ENCODE measurements at regions of chr14 and their contacts with region 1.

Region 1: DNA sequence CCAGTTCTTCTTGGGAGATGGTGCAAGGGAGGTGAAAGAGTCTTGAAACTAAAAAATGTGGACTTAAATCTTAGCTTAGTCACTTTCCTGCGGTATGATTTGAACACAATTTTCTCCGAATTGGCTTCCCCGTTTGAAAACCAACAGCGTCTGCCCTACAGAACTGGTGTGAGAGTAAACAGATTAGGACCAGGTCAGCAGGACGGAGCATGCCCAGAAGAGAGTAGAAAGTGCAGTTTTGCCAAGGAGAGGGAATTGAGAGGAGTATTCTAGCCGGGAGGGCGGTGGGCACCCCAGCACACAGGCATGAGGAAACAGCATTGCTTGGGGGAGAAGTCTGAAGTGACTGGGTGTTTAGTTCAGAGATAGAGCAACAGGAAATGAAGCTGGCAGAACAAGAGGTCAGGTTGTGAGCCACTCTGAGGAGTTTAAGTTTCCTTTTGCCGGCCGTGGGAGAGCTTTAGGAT is 927.1 kb downstream of the VRK1 start:
- DNase-seq: peak in 7 of 9 experiments; percentile 37 to 79 (median 52)
- ATAC-seq: peak; percentile 76
- H3K4me3 ChIP-seq: peak overlapping the region; percentile 16 to 41
- H3K4me3 Mint-ChIP-seq: peak overlapping the region; percentile 83
- H3K27ac ChIP-seq: peak overlapping the region; percentile 60 to 72
- H3K27ac Mint-ChIP-seq: peak overlapping the region; percentile 98
- H3K4me1 ChIP-seq: peaks cover 65% of the 10 kb centered on the region
- H3K4me1 Mint-ChIP-seq: peaks cover 78% of the 10 kb centered on the region
- H3K27me3 ChIP-seq: no peaks in the 10 kb centered on the region
- H3K27me3 Mint-ChIP-seq: no peaks in the 10 kb centered on the region
- CTCF ChIP-seq: no peak

Region 2: DNA sequence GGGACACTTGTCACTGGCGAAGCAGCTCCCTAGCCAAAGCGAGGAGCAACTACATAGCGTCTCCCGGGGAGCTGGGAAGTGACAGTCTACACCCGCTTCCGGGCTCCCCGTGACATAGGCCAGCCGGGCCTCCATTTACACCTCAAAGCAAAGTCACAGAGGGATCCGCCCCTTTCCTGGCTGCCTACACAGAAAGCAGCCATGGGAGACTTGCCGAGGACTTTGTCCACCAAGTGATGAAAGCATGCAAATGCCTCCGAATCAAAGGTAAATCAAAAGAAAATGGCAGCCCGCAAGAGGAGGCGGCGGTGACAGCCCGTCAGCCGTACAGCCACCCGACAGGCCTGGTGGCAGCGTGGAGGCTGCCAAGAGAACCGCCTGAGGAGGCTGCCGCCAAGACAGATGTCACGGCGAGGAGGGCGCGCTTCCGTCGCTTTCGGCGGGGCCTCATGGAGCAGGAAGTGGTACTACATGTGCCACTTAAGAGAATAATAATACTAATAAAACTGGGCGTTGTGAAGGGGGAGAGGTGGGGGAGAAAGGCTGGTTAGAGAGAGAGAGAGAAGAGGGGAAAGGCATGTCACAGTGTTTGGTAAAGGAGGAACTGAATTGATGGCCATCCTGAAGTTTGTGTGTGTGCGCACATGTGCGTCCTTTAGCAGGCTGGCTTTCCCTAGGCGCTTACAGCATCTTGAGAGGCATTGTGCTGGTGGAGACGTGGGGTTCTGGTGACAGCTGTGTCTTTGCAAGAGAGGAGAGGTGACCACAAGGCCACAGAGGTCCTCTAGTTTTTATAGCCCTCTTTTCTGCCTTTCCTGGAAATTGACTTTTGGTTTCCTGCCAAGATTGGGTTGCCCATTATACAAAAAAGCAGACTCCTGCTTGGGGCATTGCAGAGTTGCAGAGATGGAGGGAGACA is 265.4 kb before region 1 on chr14:
- CTCF ChIA-PET with region 1: no interaction called
- POLR2A ChIA-PET with region 1: no interaction called
- intact Hi-C with region 1: loop called in 1 of 2 experiments (anchors 5 kb)
- DNase-seq: peak; percentile 60 to 92 (median 84)
- ATAC-seq: peak; percentile 81
- H3K4me3 ChIP-seq: peak overlapping the region; percentile 53 to 62
- H3K4me3 Mint-ChIP-seq: peak overlapping the region; percentile 88
- H3K27ac ChIP-seq: peak overlapping the region; percentile 82 to 88
- H3K27ac Mint-ChIP-seq: peak overlapping the region; percentile 97
- H3K4me1 ChIP-seq: peaks cover 34% of the 10 kb centered on the region
- H3K4me1 Mint-ChIP-seq: peaks cover 75% of the 10 kb centered on the region
- H3K27me3 ChIP-seq: no peaks in the 10 kb centered on the region
- H3K27me3 Mint-ChIP-seq: no peaks in the 10 kb centered on the region
- CTCF ChIP-seq: no peak

Region 3: DNA sequence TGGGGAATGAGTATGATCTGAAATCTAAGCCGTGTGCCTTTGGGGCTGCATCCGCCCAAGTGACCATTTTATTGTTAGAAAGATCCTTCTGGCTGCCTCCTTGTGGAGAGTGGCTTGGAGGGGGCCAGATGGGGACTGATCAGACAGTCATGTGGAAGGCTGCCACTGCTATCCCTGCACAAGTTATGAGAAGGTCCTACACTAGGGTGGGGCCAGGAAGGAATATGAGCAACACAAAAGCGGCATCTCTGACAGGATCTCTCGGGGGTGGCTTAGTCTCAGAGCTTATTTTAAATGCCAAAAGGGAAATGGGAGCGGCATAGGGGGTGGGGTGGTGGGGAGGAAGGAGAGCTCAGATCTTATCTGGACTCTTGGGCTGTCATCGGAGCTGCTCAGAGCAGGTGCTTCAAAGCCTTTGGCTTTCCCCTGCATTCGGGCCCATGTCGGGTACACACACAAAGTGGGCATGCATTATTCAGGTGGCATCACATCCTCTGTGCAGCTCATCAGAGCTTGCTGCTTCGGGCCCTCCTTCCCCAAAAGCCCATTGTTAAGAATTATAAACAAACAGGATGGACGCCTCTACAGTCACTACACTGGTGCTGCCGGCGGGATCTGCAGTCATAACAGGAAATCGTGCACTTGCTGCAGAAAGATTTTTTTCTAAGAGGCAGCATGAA is 121.7 kb before region 1 on chr14:
- CTCF ChIA-PET with region 1: interaction called, 4 read pairs
- POLR2A ChIA-PET with region 1: interaction called, 7 read pairs
- intact Hi-C with region 1: loop called (anchors 1 to 2 kb)
- DNase-seq: peak; percentile 61 to 91 (median 80)
- ATAC-seq: peak; percentile 90
- H3K4me3 ChIP-seq: peak overlapping the region; percentile 19 to 21
- H3K4me3 Mint-ChIP-seq: no peak overlapping the region
- H3K27ac ChIP-seq: peak overlapping the region; percentile 66 to 84
- H3K27ac Mint-ChIP-seq: no peak overlapping the region
- H3K4me1 ChIP-seq: peaks cover 45% of the 10 kb centered on the region
- H3K4me1 Mint-ChIP-seq: peaks cover 38% of the 10 kb centered on the region
- H3K27me3 ChIP-seq: no peaks in the 10 kb centered on the region
- H3K27me3 Mint-ChIP-seq: no peaks in the 10 kb centered on the region
- CTCF ChIP-seq: no peak

Region 4: DNA sequence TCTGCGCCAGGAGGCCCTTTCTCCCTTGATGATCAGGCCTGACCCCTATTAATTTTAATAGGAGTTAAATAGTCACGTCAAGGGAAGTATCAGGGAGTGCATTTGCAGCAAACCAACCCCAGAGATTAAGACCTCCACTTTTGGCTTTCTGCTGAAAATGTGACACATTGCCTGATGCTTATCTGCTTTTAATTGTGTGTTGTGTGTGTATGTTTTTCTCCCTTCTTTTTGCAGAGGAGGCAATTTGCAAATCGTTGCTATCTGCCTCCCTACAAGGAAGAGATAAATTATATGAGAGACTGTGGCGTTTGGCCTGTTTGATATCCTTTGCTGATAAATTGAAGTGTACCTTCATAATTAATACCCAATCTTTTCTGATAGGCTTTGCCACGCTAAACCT is 104.2 kb before region 1 on chr14:
- CTCF ChIA-PET with region 1: interaction called, 4 read pairs
- POLR2A ChIA-PET with region 1: interaction called, 3 read pairs
- intact Hi-C with region 1: loop called in 1 of 2 experiments (anchors 5 kb)
- DNase-seq: peak in 1 of 9 experiments; percentile 42
- ATAC-seq: peak; percentile 15
- H3K4me3 ChIP-seq: peak overlapping the region in 1 of 2 experiments; percentile 12
- H3K4me3 Mint-ChIP-seq: peak overlapping the region; percentile 83
- H3K27ac ChIP-seq: peak overlapping the region; percentile 36 to 84
- H3K27ac Mint-ChIP-seq: peak overlapping the region; percentile 98
- H3K4me1 ChIP-seq: peaks cover 43% of the 10 kb centered on the region
- H3K4me1 Mint-ChIP-seq: peaks cover 53% of the 10 kb centered on the region
- H3K27me3 ChIP-seq: no peaks in the 10 kb centered on the region
- H3K27me3 Mint-ChIP-seq: no peaks in the 10 kb centered on the region
- CTCF ChIP-seq: no peak

Region 5: DNA sequence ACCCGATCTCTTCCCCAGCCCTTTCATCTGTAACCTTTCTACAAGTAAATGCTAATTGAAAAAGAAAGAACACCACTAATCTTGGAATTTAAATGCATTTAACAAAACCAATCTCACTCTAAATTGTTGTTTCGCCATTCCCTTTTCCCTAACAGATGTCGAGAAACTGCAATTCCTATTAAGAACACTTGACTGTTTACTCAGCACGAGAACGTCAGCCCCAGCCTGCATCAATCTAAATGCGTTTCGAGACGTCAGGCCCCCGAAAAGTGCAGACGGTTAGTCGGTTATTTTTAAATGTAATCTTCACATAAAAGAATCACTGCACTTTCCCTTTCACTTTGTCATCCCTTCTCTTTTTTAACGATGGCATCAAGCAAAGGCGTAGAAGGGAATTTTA is 89.5 kb before region 1 on chr14:
- CTCF ChIA-PET with region 1: no interaction called
- POLR2A ChIA-PET with region 1: no interaction called
- intact Hi-C with region 1: loop called in 1 of 2 experiments (anchors 5 kb)
- DNase-seq: peak in 6 of 9 experiments; percentile 19 to 68 (median 48)
- ATAC-seq: peak; percentile 85
- H3K4me3 ChIP-seq: peak overlapping the region; percentile 10 to 38
- H3K4me3 Mint-ChIP-seq: peak overlapping the region; percentile 80
- H3K27ac ChIP-seq: no peak overlapping the region
- H3K27ac Mint-ChIP-seq: peak overlapping the region; percentile 84
- H3K4me1 ChIP-seq: peaks cover 23% of the 10 kb centered on the region
- H3K4me1 Mint-ChIP-seq: peaks cover 51% of the 10 kb centered on the region
- H3K27me3 ChIP-seq: no peaks in the 10 kb centered on the region
- H3K27me3 Mint-ChIP-seq: no peaks in the 10 kb centered on the region
- CTCF ChIP-seq: no peak

Region 6: DNA sequence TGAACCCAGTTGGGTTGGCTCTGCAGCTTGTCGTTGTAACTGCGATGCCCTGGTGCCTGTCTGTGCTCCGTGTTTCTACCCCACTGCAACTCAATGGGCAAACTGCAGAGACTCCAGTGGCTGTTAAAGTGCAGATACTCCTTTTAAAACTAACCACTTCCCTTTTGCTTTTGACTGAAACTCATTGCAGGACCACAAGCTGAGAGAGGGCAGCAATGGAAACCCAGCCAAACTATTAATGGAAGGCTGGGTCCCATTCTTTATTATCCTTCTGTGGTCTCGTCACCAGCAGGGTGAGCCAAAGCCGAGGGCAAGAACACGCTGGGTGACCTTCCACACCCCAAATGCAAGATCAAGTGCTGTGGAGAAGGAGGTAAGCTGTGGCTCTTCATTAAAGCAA is 16.7 kb before region 1 on chr14:
- CTCF ChIA-PET with region 1: interaction called, 5 read pairs
- POLR2A ChIA-PET with region 1: interaction called, 6 read pairs
- intact Hi-C with region 1: loop called (anchors 1 to 2 kb)
- DNase-seq: peak in 6 of 9 experiments; percentile 26 to 68 (median 50)
- ATAC-seq: peak; percentile 13
- H3K4me3 ChIP-seq: peak overlapping the region; percentile 6 to 16
- H3K4me3 Mint-ChIP-seq: peak overlapping the region; percentile 63
- H3K27ac ChIP-seq: peak overlapping the region in 1 of 2 experiments; percentile 63
- H3K27ac Mint-ChIP-seq: peak overlapping the region; percentile 78
- H3K4me1 ChIP-seq: peaks cover 84% of the 10 kb centered on the region
- H3K4me1 Mint-ChIP-seq: peaks cover 97% of the 10 kb centered on the region
- H3K27me3 ChIP-seq: no peaks in the 10 kb centered on the region
- H3K27me3 Mint-ChIP-seq: no peaks in the 10 kb centered on the region
- CTCF ChIP-seq: no peak

Region 7: GRCh38 chr14:97771340-97772045 is 47.2 kb after region 1 on chr14:
- CTCF ChIA-PET with region 1: no interaction called
- POLR2A ChIA-PET with region 1: no interaction called
- intact Hi-C with region 1: no loop called
- DNase-seq: no peak
- ATAC-seq: no peak
- H3K4me3 ChIP-seq: no peak overlapping the region
- H3K4me3 Mint-ChIP-seq: no peak overlapping the region
- H3K27ac ChIP-seq: no peak overlapping the region
- H3K27ac Mint-ChIP-seq: no peak overlapping the region
- H3K4me1 ChIP-seq: no peaks in the 10 kb centered on the region
- H3K4me1 Mint-ChIP-seq: peaks cover 1% of the 10 kb centered on the region
- H3K27me3 ChIP-seq: no peaks in the 10 kb centered on the region
- H3K27me3 Mint-ChIP-seq: no peaks in the 10 kb centered on the region
- CTCF ChIP-seq: no peak